Activated T-helper 2 cell treated with anti-CD3 and anti-CD28 coated beads, Interferon-gamma antibody, Interleukin-2, Interleukin-4, amounts not matched to agents 10 μg/mL and 5 μg/mL and 100 μg/mL, durations not matched to agents 14 hours and 24 hours and 36 hours (primary cell): ENCODE measurements at regions of chr6 and their contacts with region 1.

Region 1: DNA sequence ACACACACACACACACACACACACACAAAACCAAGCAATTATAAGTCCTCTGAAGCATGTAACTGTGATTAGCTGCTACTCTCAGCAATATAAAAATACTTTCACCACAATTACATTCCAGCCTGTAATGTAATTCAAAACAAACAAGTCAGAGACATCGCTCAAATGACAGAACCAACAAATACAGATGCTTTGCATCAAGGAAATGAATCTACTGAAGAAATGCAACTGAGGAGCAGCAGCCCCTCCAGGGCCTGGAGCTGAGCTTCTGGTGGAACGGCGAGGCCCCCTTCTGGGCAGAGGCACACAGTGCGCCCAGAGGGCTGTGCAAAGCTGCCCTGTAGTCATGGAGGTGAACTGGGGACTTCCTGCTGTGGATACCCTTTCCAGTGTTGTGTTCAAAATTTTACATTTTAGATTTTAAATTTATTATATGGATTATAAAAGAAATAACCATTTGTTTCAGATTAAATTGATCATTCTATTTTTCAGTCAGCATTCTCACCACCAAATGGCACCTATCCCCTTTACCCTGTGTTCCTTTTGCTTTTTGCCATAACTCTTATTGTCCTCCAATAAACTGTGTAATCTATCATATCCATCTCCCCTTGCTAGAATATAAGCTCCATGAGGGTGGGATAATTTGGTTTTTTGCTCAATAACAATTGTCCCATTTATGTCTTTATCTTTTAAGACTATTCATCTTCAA is 23.2 kb downstream of the ADAT2 start:
- DNase-seq: peak; percentile 57
- H3K4me3 Mint-ChIP-seq: no peak overlapping the region
- H3K27ac Mint-ChIP-seq: peak overlapping the region; percentile 22
- H3K4me1 Mint-ChIP-seq: peaks cover 4% of the 10 kb centered on the region
- H3K27me3 Mint-ChIP-seq: no peaks in the 10 kb centered on the region

Region 2: DNA sequence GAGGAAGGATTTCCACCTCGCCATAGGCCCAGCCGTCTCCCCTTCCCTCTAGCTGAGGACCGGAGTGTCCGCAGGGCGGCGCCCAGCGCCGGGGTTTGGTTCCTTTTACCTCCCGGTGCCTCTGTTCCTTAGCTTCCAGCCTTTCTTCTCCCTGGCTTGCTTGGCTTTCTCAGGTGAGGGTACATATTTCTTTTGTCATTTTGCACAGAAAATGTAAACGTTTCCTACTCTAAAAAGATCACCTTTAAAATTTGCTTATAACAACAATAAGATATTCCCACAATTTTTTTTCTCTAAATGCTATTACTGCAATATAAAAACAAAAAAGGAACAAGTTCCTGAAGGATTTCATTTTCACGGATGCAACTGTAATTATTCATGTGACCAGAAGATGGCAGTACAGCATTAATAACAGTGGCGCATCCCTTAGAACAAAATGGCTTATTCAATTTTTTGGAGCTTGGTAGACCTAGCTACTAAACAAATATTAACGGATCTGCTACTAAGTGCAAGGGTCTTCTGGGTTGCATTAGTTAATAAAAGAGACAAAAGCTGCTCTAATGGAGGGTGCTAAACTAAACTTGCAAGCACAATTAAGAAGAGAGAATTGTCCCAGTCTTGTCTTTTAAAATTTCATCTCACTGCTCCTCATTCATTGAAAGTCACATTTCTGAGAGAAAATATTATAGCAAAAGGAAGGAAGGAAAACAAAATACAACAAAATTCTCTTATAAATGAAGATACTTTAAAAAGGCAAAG is 952.6 kb before region 1 on chr6:
- intact Hi-C with region 1: loop called (anchors 10 kb)
- DNase-seq: no peak
- H3K4me3 Mint-ChIP-seq: no peak overlapping the region
- H3K27ac Mint-ChIP-seq: no peak overlapping the region
- H3K4me1 Mint-ChIP-seq: peaks cover 3% of the 10 kb centered on the region
- H3K27me3 Mint-ChIP-seq: peaks cover 8% of the 10 kb centered on the region

Region 3: GRCh38 chr6:142566628-142567396 is 860.5 kb before region 1 on chr6:
- intact Hi-C with region 1: loop called (anchors 2 kb)
- DNase-seq: peak; percentile 14
- H3K4me3 Mint-ChIP-seq: no peak overlapping the region
- H3K27ac Mint-ChIP-seq: no peak overlapping the region
- H3K4me1 Mint-ChIP-seq: peaks cover 19% of the 10 kb centered on the region
- H3K27me3 Mint-ChIP-seq: no peaks in the 10 kb centered on the region

Region 4: GRCh38 chr6:143232849-143233248 is 194.4 kb before region 1 on chr6:
- intact Hi-C with region 1: loop called (anchors 10 kb)
- DNase-seq: no peak
- H3K4me3 Mint-ChIP-seq: no peak overlapping the region
- H3K27ac Mint-ChIP-seq: no peak overlapping the region
- H3K4me1 Mint-ChIP-seq: no peaks in the 10 kb centered on the region
- H3K27me3 Mint-ChIP-seq: no peaks in the 10 kb centered on the region